Activated CD4-positive, alpha-beta memory T cell treated with anti-CD3 and anti-CD28 coated beads for 36 hours (primary cell): ENCODE measurements at regions of chr22 and their contacts with region 1.

Region 1: GRCh38 chr22:30005213-30005857 is 74.9 kb upstream of the HORMAD2 start:
- DNase-seq: peak; percentile 78
- H3K4me3 Mint-ChIP-seq: no peak overlapping the region
- H3K27ac Mint-ChIP-seq: no peak overlapping the region
- H3K4me1 Mint-ChIP-seq: peaks cover 7% of the 10 kb centered on the region
- H3K27me3 Mint-ChIP-seq: no peaks in the 10 kb centered on the region

Region 2: GRCh38 chr22:29635734-29636357 is 369.5 kb before region 1 on chr22:
- CTCF ChIA-PET with region 1: interaction called, 10 read pairs
- POLR2A ChIA-PET with region 1: no interaction called
- intact Hi-C with region 1: no loop called
- DNase-seq: no peak
- H3K4me3 Mint-ChIP-seq: no peak overlapping the region
- H3K27ac Mint-ChIP-seq: no peak overlapping the region
- H3K4me1 Mint-ChIP-seq: peaks cover 16% of the 10 kb centered on the region
- H3K27me3 Mint-ChIP-seq: no peaks in the 10 kb centered on the region

Region 3: DNA sequence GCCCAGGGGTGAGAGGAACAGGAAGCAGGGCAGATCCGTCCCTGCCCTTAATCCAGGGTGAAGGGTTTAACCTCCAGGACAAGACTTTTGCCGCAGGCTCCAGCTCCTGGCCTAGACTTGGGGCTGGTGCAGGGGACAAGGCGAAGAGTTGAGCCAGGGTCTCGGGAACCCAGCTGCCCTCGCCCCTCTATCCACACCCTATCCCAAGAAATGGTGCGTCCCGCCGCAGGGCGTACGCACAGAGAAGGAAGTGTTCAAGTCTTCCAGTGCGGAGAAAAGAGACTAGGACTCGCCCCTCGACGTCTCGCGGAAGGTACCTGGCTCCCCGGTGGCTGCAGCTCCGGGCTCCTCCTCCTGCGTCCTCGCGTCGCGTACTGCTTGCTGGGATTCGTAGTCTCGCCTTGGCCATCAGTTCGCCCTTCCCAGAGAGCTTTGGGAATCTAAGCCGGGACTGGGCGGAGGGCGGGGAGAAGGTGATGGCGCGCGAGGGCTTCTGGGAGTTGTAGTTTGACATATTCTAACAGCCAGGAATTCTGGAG is 238.6 kb before region 1 on chr22 and contains the start of gene ZMAT5:
- CTCF ChIA-PET with region 1: interaction called, 4 read pairs
- POLR2A ChIA-PET with region 1: no interaction called
- intact Hi-C with region 1: loop called (anchors 2 kb)
- DNase-seq: peak; percentile 96
- H3K4me3 Mint-ChIP-seq: peak within 1 kb of the TSS; percentile 100
- H3K27ac Mint-ChIP-seq: peak within 1 kb of the TSS; percentile 94
- H3K4me1 Mint-ChIP-seq: peaks cover 26% of the 10 kb centered on the region
- H3K27me3 Mint-ChIP-seq: no peaks in the 10 kb centered on the region
- total RNA-seq, gene ZMAT5: 18.1 to 20.6 TPM

Region 4: GRCh38 chr22:29830585-29830984 is 174.8 kb before region 1 on chr22:
- CTCF ChIA-PET with region 1: interaction called, 11 read pairs
- POLR2A ChIA-PET with region 1: no interaction called
- intact Hi-C with region 1: no loop called
- DNase-seq: no peak
- H3K4me3 Mint-ChIP-seq: no peak overlapping the region
- H3K27ac Mint-ChIP-seq: no peak overlapping the region
- H3K4me1 Mint-ChIP-seq: peaks cover 8% of the 10 kb centered on the region
- H3K27me3 Mint-ChIP-seq: no peaks in the 10 kb centered on the region

Region 5: GRCh38 chr22:29994027-29994715 is 11.2 kb before region 1 on chr22:
- CTCF ChIA-PET with region 1: interaction called, 39 read pairs
- POLR2A ChIA-PET with region 1: no interaction called
- intact Hi-C with region 1: no loop called
- DNase-seq: no peak
- H3K4me3 Mint-ChIP-seq: no peak overlapping the region
- H3K27ac Mint-ChIP-seq: peak overlapping the region; percentile 21
- H3K4me1 Mint-ChIP-seq: peaks cover 16% of the 10 kb centered on the region
- H3K27me3 Mint-ChIP-seq: no peaks in the 10 kb centered on the region